Activated CD4-positive, alpha-beta T cell treated with anti-CD3 and anti-CD28 coated beads, Interleukin-2, amount 10 ng/mL, durations not matched to agents 24 days and 14 days (primary cell): ENCODE measurements at regions of chr5 and their contacts with region 1.

Region 1: DNA sequence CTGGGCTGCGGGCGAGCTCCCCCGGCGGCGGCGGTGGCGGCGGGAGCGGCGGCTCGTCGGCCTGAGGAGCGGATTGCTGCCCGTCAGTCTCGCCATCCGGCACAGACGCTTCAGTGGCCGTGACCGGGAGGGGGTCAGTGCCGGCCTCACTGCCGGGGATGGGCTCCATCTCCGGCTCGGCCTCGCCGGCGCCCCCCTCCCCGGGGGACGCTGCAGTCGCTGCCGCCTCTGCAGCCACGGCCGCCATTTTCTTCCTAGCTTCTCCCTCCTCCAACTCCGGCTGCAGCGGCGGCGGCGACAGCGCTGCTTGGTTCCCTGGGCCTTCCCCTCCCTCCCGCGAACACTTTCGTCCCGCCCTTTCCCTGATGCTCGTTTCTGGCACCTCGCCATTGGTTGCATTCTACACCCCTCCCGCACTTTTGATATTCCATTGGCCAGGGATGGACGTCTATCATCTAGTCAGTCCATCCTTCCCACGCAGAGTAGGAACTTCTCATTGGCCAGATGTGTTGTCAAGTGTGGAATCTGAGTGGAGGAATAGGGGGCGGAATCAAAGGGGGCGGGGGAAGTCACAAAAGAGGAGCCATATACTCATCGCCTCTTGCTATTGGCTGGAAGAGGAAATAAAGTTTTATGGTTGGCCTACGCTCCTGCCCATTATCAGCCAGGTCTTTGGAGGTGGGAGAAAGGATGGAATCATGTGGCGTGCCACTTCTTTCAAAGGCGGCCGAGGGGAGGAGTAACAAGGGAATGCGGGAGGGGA is at the start of gene PWWP2A:
- DNase-seq: peak; percentile 99
- H3K4me3 Mint-ChIP-seq: peak within 1 kb of the TSS; percentile 91
- H3K27ac Mint-ChIP-seq: peak within 1 kb of the TSS; percentile 96
- H3K4me1 Mint-ChIP-seq: peaks cover 14% of the 10 kb centered on the region
- H3K27me3 Mint-ChIP-seq: peaks cover 11% of the 10 kb centered on the region
- total RNA-seq, gene PWWP2A: 26.1 and 26.7 TPM in 2 replicates

Region 2: DNA sequence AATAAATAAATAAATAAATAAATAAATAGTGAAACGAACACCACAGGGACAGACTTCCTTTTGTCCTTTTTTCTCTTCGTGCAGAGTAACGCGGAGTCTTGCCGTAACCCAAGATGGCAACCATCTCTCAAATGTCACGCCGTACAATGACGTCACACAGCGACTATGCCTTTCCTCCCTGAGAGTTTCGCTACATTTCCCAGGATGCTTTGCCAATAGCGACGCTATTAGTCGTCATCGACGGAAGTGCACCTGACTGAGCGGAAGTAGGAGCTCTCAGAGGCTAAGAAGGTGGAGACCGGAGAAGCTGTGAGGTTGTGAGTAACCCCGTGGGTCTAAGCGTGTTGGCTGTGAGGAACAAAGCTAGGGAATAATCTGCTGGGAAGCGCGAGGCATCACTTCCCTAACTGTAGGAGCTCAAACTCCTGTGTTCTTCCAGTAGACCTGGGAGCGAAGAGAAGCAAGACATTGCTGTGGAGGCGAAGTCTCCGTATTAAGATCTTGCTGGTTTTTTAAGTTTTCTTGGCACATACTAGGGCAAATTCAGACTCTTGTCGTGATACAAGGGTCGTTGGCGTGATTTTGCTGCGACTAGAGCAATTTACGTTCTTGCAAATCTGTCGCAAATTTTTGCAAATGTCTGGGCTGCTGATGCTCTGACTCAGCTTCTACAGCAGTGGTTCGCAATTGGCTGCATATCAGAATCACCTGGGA is 110.3 kb before region 1 on chr5 and contains the start of gene TTC1:
- intact Hi-C with region 1: loop called (anchors 1 kb)
- DNase-seq: peak; percentile 97
- H3K4me3 Mint-ChIP-seq: peak within 1 kb of the TSS; percentile 97
- H3K27ac Mint-ChIP-seq: peak within 1 kb of the TSS; percentile 99
- H3K4me1 Mint-ChIP-seq: peaks cover 25% of the 10 kb centered on the region
- H3K27me3 Mint-ChIP-seq: peaks cover 2% of the 10 kb centered on the region
- total RNA-seq, gene TTC1: 64.8 and 68.0 TPM in 2 replicates

Region 3: DNA sequence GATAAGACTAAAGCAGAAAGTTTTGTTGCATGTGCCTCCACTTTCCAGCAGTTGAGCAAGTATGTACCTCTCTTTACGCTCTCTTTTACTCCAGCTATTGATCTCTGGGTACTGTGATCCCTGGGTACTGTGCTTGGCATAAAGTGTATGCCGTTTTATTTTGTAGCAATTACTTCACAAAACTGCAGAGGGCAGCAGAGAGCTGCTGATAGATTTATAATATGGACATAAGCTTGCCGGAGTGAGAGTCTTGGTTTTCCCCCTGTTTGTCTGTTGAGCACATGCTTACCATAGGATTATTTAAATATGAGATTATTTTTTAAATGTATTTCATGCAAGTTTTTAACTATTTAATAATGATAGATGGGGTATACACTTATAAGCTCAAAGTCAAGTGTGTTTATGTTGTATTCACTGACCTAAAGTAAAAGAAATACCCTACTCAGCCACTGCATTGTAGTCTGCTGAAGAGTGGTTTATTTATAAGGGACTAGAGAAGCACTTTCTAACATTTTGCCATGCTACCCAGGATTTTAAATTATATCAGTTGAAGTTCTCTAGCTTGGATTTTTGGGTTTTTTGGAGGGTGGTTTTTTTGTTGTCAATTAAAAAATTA is 97.4 kb before region 1 on chr5:
- intact Hi-C with region 1: loop called (anchors 2 kb)
- DNase-seq: peak; percentile 89
- H3K4me3 Mint-ChIP-seq: no peak overlapping the region
- H3K27ac Mint-ChIP-seq: no peak overlapping the region
- H3K4me1 Mint-ChIP-seq: peaks cover 15% of the 10 kb centered on the region
- H3K27me3 Mint-ChIP-seq: no peaks in the 10 kb centered on the region

Region 4: DNA sequence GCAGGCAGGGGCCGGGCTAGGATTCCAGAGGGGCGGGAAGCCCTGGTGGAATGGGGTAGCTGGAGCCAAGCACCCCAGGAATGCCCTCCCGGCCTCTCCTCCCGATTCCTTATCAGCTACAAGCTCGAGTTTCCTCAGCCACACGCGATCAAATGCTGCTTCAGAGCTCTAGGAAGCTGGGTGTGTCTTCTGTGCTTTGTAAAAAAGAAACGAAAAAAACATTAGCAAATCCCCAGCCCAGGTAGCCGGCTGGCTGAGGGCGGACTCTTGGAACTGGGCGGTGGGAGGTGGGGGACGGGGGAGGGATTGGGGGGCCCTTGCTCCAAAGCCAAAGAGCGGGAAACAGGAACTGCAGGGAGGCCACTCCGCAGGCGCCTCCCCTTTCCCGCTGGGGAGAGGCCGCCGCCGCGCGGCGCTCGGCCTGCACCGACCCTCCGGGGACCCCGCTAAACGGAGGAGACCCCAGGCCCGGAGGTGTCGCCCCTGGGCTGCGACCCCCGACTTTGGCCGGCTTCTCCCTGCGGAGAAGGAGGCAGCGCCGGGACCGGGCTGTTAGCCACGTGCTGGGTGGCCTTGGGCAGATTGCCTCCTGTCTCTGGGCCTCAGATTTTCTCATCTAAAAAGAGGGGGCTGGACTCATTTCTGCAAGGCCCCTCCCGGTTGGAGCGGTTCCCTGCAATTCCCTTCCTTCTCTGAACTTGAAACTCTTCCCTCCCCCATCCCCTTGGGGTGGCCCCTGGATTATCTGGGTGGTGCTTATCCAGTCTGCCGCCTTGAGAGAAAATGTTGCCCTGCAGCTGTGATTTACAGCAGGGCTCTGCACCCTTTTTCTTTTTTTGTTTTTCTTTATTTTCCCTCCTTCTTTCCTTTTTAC is 69.1 kb after region 1 on chr5:
- intact Hi-C with region 1: no loop called
- DNase-seq: peak; percentile 63
- H3K4me3 Mint-ChIP-seq: peak overlapping the region; percentile 58
- H3K27ac Mint-ChIP-seq: peak overlapping the region; percentile 32
- H3K4me1 Mint-ChIP-seq: peaks cover 2% of the 10 kb centered on the region
- H3K27me3 Mint-ChIP-seq: peaks cover 6% of the 10 kb centered on the region

Region 5: GRCh38 chr5:160199410-160199911 is 80.1 kb after region 1 on chr5:
- intact Hi-C with region 1: loop called (anchors 5 kb)
- DNase-seq: peak; percentile 93
- H3K4me3 Mint-ChIP-seq: peak overlapping the region; percentile 83
- H3K27ac Mint-ChIP-seq: no peak overlapping the region
- H3K4me1 Mint-ChIP-seq: peaks cover 4% of the 10 kb centered on the region
- H3K27me3 Mint-ChIP-seq: peaks cover 14% of the 10 kb centered on the region

Region 6: DNA sequence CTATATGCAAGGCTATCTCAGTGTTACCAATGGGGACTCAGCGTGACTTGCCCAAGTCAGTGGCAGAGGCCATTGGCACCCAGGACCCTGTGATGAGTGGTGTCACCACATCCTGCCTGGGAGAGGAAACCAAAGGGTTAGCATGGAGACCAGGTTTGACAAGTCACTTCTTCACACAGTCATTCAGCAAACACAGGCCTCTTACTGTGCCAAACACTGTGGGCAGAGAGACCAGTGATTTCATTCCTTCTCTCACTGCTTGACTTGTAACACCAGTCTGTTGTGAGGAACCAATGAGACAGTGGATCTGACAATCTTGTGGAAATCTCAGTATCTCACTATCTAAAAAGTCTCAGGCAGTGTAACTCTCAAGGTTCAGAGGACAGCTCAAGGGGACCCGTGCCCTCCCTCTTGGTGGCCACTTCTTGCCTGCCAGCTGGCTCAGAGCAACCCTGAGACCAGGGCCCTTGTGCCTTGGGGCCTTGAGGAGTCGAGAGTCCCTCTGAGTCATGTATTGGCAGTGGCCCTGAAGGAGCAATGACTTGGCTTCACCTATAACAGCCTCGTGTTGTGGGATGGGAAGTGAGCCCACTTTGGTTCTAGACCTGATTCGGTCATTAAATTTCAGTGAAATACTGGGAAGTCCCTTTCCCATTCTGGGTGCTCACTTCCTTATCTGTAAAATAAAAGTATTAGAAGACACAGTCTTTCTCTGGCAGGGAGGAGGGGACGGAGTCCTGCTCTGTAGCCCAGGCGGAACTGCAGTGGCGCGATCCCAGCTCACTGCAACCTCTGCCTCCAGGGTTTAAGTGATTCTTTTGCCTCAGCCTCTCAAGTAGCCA is 111.6 kb after region 1 on chr5:
- intact Hi-C with region 1: no loop called
- DNase-seq: no peak
- H3K4me3 Mint-ChIP-seq: no peak overlapping the region
- H3K27ac Mint-ChIP-seq: no peak overlapping the region
- H3K4me1 Mint-ChIP-seq: no peaks in the 10 kb centered on the region
- H3K27me3 Mint-ChIP-seq: no peaks in the 10 kb centered on the region

Region 7: GRCh38 chr5:160399402-160400353 is 280.4 kb after region 1 on chr5 and contains the start of gene FAM200C:
- intact Hi-C with region 1: loop called (anchors 5 kb)
- DNase-seq: peak; percentile 94
- H3K4me3 Mint-ChIP-seq: peak within 1 kb of the TSS; percentile 94
- H3K27ac Mint-ChIP-seq: peak within 1 kb of the TSS; percentile 85
- H3K4me1 Mint-ChIP-seq: peaks cover 14% of the 10 kb centered on the region
- H3K27me3 Mint-ChIP-seq: peaks cover 2% of the 10 kb centered on the region
- total RNA-seq, gene FAM200C: 1.4 and 1.5 TPM in 2 replicates

Region 8: DNA sequence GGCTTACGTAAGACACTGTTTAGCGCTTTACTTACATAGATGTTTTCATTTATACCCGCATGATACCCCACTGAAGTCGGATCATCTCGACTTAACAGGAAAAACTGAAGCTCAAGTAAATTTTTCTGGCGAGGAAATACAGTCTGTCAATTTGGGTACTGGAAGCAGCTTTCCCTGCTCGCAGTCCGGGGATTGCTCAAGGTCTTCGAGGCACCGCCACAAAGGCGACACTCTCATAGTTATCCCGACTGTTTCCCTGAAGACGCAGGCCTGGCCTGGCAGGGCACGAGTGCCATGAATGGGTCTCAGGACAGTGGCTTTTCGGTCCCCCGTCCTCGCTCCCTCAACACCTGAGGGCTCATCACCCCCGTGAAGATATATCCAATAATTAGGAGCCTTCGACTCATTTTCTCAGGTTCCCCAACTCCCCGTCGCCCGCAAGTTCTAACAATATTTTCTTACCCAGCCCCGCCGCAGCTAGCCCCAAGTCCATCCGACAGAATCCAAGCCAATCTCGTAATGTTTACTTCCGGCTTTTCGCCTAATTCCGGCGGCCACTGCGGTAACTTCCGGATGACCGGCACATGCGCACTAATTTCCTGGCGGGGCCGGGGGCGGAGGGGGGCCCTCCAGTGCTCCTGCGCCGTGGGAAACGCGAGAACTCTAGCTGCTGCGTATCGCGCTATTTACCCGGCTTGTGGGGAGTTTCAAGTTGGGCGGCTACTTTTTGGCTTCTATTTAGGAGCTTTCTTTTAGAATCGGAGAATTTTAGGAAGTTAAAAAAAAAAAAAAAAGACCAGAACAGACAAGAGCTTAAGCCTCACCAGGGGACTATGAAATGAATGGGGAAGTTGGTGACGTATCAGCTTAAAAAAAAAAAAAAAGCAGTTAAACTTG is 299.5 kb after region 1 on chr5 and contains the start of gene SLU7:
- intact Hi-C with region 1: loop called (anchors 1 kb)
- DNase-seq: peak; percentile 98
- H3K4me3 Mint-ChIP-seq: peak within 1 kb of the TSS; percentile 97
- H3K27ac Mint-ChIP-seq: peak within 1 kb of the TSS; percentile 97
- H3K4me1 Mint-ChIP-seq: peaks cover 61% of the 10 kb centered on the region
- H3K27me3 Mint-ChIP-seq: no peaks in the 10 kb centered on the region
- total RNA-seq, gene SLU7: 38.4 and 39.8 TPM in 2 replicates

Region 9: DNA sequence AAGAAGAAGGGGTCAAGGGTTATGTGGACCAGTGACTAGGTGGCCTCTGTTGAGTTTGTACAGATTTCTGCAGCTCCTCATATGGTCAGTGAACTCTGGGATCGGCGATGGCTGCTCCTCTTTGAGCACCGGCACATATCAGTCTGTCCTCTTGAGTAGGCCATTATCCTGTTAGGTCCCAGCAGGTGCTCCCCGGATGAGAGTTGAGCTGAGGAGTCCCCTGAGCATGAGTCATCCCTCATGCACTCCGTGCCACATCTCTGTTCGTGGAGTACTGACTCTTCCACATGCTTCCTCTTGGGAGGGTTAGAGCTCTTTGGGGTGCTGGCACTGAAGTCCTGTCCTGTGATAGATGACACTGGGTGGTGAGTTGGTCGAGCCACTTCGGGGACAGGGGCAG is 446.1 kb after region 1 on chr5:
- intact Hi-C with region 1: no loop called
- DNase-seq: no peak
- H3K4me3 Mint-ChIP-seq: no peak overlapping the region
- H3K27ac Mint-ChIP-seq: no peak overlapping the region
- H3K4me1 Mint-ChIP-seq: no peaks in the 10 kb centered on the region
- H3K27me3 Mint-ChIP-seq: peaks cover 5% of the 10 kb centered on the region